Astrocyte of the cerebellum (primary cell): ENCODE measurements at regions of chr14 and their contacts with region 1.

Region 1: GRCh38 chr14:67285876-67286452 is 44.7 kb downstream of the PALS1 start:
- DNase-seq: peak; percentile 55
- H3K4me3 ChIP-seq: no peak overlapping the region
- CTCF ChIP-seq: peak; percentile 13

Region 2: DNA sequence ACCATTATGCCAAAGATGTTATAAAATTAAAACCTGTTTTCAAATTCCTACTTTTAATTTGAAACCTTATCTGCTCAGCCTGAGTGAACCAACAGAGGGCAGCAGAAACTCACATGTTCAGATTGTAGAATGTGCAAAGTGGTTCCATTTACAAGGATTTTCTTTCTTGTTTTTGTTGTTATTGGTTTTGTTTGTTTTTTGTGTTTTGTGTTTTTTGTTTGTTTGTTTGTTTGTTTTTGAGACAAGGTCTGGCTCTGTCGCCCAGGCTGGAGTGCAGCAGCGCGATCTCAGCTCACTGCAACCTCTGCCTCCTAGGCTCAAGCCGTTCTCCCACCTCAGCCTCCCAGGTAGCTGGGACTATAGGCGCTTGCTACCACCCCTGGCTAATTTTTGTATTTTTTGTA is 119.5 kb before region 1 on chr14:
- in situ Hi-C with region 1: loop called (anchors 10 kb)
- DNase-seq: peak; percentile 48
- H3K4me3 ChIP-seq: no peak overlapping the region
- CTCF ChIP-seq: peak; percentile 72

Region 3: GRCh38 chr14:67218936-67219335 is 67.0 kb before region 1 on chr14:
- in situ Hi-C with region 1: no loop called
- DNase-seq: no peak
- H3K4me3 ChIP-seq: no peak overlapping the region
- CTCF ChIP-seq: no peak

Region 4: GRCh38 chr14:67359775-67360648 is 74.0 kb after region 1 on chr14 and contains the starts of genes ATP6V1D and EIF2S1:
- in situ Hi-C with region 1: no loop called
- DNase-seq: peak; percentile 97
- H3K4me3 ChIP-seq: peak within 1 kb of the TSS; percentile 65
- CTCF ChIP-seq: peak; percentile 96

Region 5: GRCh38 chr14:67491741-67492505 is 206.0 kb after region 1 on chr14:
- in situ Hi-C with region 1: no loop called
- DNase-seq: no peak
- H3K4me3 ChIP-seq: no peak overlapping the region
- CTCF ChIP-seq: no peak